ENCODE measurements at regions of chr18 and their contacts with region 1.

Region 1: GRCh38 chr18:66005831-66006588 is 255.2 kb downstream of the CDH7 start:
- DNase-seq: peak in 1 of 2 donors; percentile 11
- ATAC-seq: no peak
- H3K4me3 ChIP-seq: no peak overlapping the region
- H3K27ac ChIP-seq: no peak overlapping the region
- H3K4me1 ChIP-seq: no peaks in the 10 kb centered on the region
- H3K27me3 ChIP-seq: no peaks in the 10 kb centered on the region
- CTCF ChIP-seq: no peak

Region 2: GRCh38 chr18:65942103-65942502 is 63.9 kb before region 1 on chr18:
- intact Hi-C with region 1: loop called in 1 of 10 experiments (anchors 10 kb)
- DNase-seq: no peak
- ATAC-seq: no peak
- H3K4me3 ChIP-seq: no peak overlapping the region
- H3K27ac ChIP-seq: no peak overlapping the region
- H3K4me1 ChIP-seq: no peaks in the 10 kb centered on the region
- H3K27me3 ChIP-seq: no peaks in the 10 kb centered on the region
- CTCF ChIP-seq: no peak

Region 3: DNA sequence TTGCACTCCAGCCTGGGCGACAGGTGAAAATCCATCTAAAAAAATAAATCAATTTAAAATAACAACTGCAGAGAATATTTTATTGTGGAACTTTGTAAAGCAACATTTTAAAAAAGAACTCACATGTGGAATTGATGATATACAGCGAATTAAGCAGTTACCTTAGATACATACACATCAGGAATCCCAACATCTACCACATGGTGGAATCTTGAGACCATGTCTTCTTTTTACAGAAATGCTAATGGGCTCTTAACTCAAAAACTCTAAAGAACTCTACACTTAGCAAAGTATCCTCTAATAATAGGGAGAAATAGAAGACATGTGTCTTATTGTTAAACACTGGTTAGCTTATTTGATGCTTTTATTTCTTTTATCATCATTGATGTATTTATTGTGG is 118.4 kb after region 1 on chr18:
- intact Hi-C with region 1: no loop called
- DNase-seq: no peak
- ATAC-seq: no peak
- H3K4me3 ChIP-seq: no peak overlapping the region
- H3K27ac ChIP-seq: no peak overlapping the region
- H3K4me1 ChIP-seq: no peaks in the 10 kb centered on the region
- H3K27me3 ChIP-seq: no peaks in the 10 kb centered on the region
- CTCF ChIP-seq: peak in 7 of 9 donors; percentile 22 to 54 (median 49)

Region 4: DNA sequence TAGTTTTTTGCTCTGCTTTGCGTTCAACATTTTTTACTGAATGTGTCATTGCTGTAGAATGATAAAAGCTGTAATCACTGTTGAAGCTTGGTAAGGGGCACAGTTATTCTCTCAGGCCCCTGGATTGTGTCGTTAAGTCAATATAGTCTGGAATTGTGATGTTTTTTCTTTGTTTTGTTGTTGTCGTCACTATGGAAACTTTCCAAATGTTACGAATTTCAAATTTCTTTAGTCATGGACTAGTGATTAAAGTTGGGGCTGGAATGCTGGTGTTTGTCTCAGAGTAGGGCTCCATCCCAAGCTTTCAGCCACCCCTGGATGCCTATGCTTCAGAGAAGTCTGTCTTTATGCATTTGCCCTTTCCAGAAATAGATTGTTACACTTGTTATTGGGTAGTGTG is 310.7 kb after region 1 on chr18:
- intact Hi-C with region 1: no loop called
- DNase-seq: no peak
- ATAC-seq: no peak
- H3K4me3 ChIP-seq: no peak overlapping the region
- H3K27ac ChIP-seq: no peak overlapping the region
- H3K4me1 ChIP-seq: no peaks in the 10 kb centered on the region
- H3K27me3 ChIP-seq: no peaks in the 10 kb centered on the region
- CTCF ChIP-seq: no peak